ENCODE measurements at regions of chr20 and their contacts with region 1.

Region 1: DNA sequence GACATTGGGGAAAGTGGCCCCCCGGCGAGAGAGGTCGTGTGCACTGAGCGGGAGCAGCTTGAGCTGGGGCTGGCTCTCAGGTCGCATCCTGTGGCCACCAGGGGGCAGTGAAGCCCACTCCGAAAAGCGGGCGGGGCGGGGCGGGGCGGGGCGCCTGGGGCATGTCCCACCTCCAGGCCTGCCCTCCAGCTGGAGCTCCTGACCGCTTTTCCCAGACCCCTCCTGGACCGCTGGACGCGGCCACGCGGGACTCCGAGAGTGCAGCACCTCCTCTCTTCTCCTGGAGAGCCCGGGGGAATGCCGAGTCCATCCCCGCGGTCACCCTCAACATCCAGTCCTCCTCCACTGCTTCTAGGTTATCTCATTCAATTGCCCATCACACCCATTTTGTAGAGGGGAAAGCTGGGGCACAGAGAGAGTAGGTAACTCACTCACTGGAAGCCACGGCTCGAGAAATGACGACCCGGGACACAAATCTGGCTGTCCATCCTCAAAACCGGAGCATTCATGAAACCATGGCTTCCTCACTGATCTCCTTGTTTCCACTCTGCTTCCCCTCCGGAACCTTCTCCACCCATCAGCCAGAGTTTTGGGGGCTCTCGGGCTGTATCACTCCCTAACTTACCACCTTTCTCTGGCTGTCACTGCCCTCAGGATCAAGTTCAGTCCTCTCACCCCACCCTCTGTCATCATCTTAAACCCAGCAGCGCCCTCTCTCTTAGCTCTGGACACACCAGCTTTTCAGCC is 24.1 kb downstream of the COX4I2 start:
- DNase-seq: peak; percentile 62 to 70
- H3K4me3 ChIP-seq: peak overlapping the region; percentile 23 to 59 (median 44)
- H3K27ac ChIP-seq: peak overlapping the region; percentile 73 to 86
- H3K4me1 ChIP-seq: peaks cover 0 to 3% of the 10 kb centered on the region in 2 donors
- H3K27me3 ChIP-seq: no peaks in the 10 kb centered on the region
- CTCF ChIP-seq: peak; percentile 59 to 82 (median 67)
- POLR2A ChIP-seq: no peak

Region 2: GRCh38 chr20:31617432-31618104 is 44.2 kb before region 1 on chr20:
- intact Hi-C with region 1: no loop called
- DNase-seq: no peak
- H3K4me3 ChIP-seq: no peak overlapping the region
- H3K27ac ChIP-seq: no peak overlapping the region
- H3K4me1 ChIP-seq: no peaks in the 10 kb centered on the region
- H3K27me3 ChIP-seq: no peaks in the 10 kb centered on the region
- CTCF ChIP-seq: no peak
- POLR2A ChIP-seq: no peak

Region 3: DNA sequence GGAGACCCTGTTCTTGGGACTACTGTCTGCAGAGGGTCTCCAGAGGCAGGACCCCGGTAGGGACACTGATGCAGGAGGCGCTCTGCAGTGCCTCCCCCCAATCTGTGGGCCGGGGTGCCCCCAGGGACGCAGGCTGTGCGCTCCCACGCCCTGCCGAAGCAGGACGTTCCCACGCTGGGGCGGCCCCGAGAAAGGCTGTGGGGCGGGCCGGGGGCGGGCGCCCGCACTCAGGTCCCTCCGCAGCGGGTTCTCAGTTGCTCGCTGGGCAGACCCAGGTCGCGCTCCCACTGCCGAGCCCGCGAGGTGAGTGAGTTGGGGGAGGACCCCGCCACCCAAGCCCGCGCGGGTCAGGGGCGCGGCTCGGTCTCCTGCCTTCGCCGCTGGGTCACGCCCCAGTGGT is 24.1 kb before region 1 on chr20 and contains the start of gene COX4I2:
- intact Hi-C with region 1: loop called (anchors 1 kb)
- DNase-seq: no peak
- H3K4me3 ChIP-seq: peak within 1 kb of the TSS; percentile 9 to 52 (median 9)
- H3K27ac ChIP-seq: peak within 1 kb of the TSS in 1 of 2 donors; percentile 43
- H3K4me1 ChIP-seq: no peaks in the 10 kb centered on the region
- H3K27me3 ChIP-seq: peaks cover 0 to 17% of the 10 kb centered on the region in 2 donors
- CTCF ChIP-seq: no peak
- POLR2A ChIP-seq: no peak
- total RNA-seq, gene COX4I2: 5.3 TPM in 1 of 3 donors, not detected in the others

Region 4: DNA sequence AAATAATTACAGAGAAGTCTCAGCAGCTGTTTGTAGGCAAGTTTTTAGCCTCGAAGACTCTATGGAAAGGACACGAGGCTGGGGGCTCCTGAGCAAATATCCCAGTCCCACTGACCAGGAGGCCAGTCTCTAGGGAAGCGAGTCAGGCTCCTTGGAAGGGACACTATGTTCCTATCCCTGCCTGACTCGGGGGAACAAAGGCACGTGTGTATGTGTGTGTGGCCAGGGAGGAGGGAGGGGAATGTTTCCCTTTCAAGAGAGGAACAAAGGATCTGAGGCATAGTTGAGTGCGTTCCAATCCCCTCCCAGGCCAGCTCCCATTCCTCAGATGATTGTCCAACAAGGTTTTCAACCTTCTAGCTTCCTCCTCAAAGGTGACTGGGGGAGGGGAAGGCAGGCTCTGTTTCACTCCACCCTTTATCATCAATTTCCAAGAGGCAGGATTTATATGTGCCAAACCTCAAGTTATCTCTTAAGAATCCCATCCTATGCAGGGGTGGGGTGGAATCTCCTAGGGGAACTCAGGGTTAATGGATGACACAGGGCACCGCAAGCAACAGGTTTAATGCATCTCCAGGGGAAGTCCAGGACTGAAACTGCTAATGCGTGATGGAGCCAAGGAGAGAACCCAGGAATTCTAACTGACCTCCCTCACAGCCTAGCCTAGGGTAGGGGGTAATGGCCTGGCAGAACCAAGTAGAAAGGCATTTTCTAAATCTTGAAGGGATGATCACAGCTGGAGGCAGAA is 50.9 kb after region 1 on chr20:
- intact Hi-C with region 1: no loop called
- DNase-seq: peak; percentile 83 to 98
- H3K4me3 ChIP-seq: peak overlapping the region in 2 of 3 donors; percentile 24 to 59
- H3K27ac ChIP-seq: peak overlapping the region; percentile 100
- H3K4me1 ChIP-seq: peaks cover 24 to 77% of the 10 kb centered on the region in 2 donors
- H3K27me3 ChIP-seq: no peaks in the 10 kb centered on the region
- CTCF ChIP-seq: peak in 1 of 3 donors; percentile 13
- POLR2A ChIP-seq: no peak

Region 5: GRCh38 chr20:31723319-31724078 is 61.7 kb after region 1 on chr20:
- intact Hi-C with region 1: loop called (anchors 2 kb)
- DNase-seq: peak; percentile 97
- H3K4me3 ChIP-seq: peak overlapping the region; percentile 63 to 83 (median 73)
- H3K27ac ChIP-seq: peak overlapping the region; percentile 100
- H3K4me1 ChIP-seq: peaks cover 0 to 6% of the 10 kb centered on the region in 2 donors
- H3K27me3 ChIP-seq: no peaks in the 10 kb centered on the region
- CTCF ChIP-seq: peak; percentile 98 to 99 (median 99)
- POLR2A ChIP-seq: no peak

Measured in breast epithelium (tissue), 4 donors.